A549 (cell line): ENCODE measurements at regions of chr13 and their contacts with region 1.

Region 1: GRCh38 chr13:113666951-113667701 is at the start of gene GRK1:
- DNase-seq: no peak
- ATAC-seq: peak in 1 of 2 experiments; percentile 39; a peak in 1 of 6 replicates
- H3K4me3 ChIP-seq: no peak within 1 kb of the TSS
- H3K27ac ChIP-seq: no peak within 1 kb of the TSS
- H3K4me1 ChIP-seq: no peaks in the 10 kb centered on the region
- CTCF ChIP-seq: no peak
- EP300 ChIP-seq: no peak
- POLR2A ChIP-seq: no peak
- RAD21 ChIP-seq: no peak
- polyA plus RNA-seq, gene GRK1: not detected in 2 replicates

Region 2: GRCh38 chr13:113724780-113725315 is 57.7 kb after region 1 on chr13:
- CTCF ChIA-PET with region 1: interaction called, 14 read pairs
- POLR2A ChIA-PET with region 1: no interaction called
- DNase-seq: peak; percentile 49 to 74
- ATAC-seq: peak; percentile 97 to 98
- H3K4me3 ChIP-seq: peak overlapping the region; percentile 46
- H3K27ac ChIP-seq: peak overlapping the region; percentile 18 to 74; a peak in 2 of 6 replicates
- H3K4me1 ChIP-seq: no peaks in the 10 kb centered on the region
- CTCF ChIP-seq: peak; percentile 64
- EP300 ChIP-seq: no peak
- POLR2A ChIP-seq: no peak; the same call in 1 of the 2 replicates
- RAD21 ChIP-seq: peak; percentile 58 to 72